ENCODE measurements at regions of chr1 and their contacts with region 1.

Region 1: DNA sequence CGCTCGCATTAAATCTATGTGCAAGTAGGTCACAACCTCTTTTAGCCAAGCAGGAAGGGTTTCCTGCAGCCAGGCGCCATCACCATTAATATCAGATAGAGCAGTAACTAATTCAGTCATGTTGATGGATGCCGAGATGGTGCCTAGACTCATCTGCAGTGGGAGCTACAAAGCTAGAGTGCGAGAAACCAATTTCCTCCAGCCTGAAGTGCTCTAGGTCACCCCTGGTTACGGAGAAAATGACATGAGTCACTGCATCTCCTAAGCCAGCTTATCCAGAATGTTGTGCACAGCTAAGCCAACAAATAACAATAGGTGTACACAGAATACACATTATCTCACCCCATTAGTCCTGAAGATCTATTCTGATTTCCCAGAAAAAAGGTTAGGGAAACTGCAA is 36.0 kb downstream of the OVAAL start:
- DNase-seq: no peak
- ATAC-seq: no peak
- H3K4me3 ChIP-seq: no peak overlapping the region
- H3K27ac ChIP-seq: no peak overlapping the region
- H3K4me1 ChIP-seq: no peaks in the 10 kb centered on the region
- H3K27me3 ChIP-seq: no peaks in the 10 kb centered on the region
- CTCF ChIP-seq: no peak
- POLR2A ChIP-seq: no peak
- RAD21 ChIP-seq: no peak

Region 2: DNA sequence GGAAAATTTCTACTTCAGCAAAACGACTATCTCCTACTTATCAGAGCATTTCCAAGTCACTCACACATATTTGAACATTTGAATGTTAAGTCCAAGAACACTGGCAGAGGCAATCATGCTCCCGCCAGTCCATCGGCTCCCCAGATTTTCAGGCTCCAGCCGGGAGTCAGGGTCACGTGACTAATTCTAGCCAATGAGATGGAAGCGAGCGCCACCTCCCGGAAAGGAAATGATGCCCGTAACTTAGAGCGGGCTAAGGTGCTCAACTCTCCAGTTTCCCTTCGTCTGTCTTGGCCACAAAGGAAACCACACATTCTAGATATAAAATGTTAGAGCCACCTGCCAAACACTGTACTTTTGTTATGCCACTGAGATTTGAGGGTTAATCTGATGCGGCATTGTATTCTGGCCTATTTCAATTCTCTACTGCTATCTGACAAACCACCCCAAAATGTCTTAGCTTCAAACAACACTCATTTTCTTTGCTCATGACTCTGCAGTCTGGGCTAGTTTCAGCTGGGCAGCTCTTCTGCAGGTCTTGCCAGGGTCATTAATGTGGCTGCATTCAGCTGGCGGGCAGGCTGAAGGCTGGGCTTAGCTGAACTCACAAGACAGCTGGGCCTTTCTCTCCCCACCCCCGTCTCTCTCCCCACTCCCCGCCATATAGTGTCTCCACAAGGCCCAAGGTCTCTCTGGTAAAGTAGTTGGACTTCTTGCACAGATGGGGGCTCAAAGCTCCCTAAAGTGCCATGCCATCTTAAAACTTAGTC is 381.1 kb before region 1 on chr1:
- CTCF ChIA-PET with region 1: no interaction called
- POLR2A ChIA-PET with region 1: no interaction called
- dilution Hi-C with region 1: no loop called
- in situ Hi-C with region 1: no loop called
- intact Hi-C with region 1: loop called (anchors 5 kb)
- DNase-seq: no peak
- ATAC-seq: no peak
- H3K4me3 ChIP-seq: no peak overlapping the region
- H3K27ac ChIP-seq: no peak overlapping the region
- H3K4me1 ChIP-seq: peaks cover 2% of the 10 kb centered on the region; the same call in 1 of the 2 replicates
- H3K27me3 ChIP-seq: peaks cover 7% of the 10 kb centered on the region; the same call in 1 of the 2 replicates
- CTCF ChIP-seq: no peak
- POLR2A ChIP-seq: no peak
- RAD21 ChIP-seq: no peak

Region 3: GRCh38 chr1:180521474-180522207 is 73.1 kb before region 1 on chr1:
- CTCF ChIA-PET with region 1: no interaction called
- POLR2A ChIA-PET with region 1: no interaction called
- dilution Hi-C with region 1: no loop called
- in situ Hi-C with region 1: no loop called
- intact Hi-C with region 1: no loop called
- DNase-seq: no peak
- ATAC-seq: no peak
- H3K4me3 ChIP-seq: no peak overlapping the region
- H3K27ac ChIP-seq: no peak overlapping the region; the same call in 1 of the 2 replicates
- H3K4me1 ChIP-seq: peaks cover 23% of the 10 kb centered on the region
- H3K27me3 ChIP-seq: no peaks in the 10 kb centered on the region
- CTCF ChIP-seq: no peak
- POLR2A ChIP-seq: no peak
- RAD21 ChIP-seq: no peak

Region 4: GRCh38 chr1:180609643-180610555 is 15.2 kb after region 1 on chr1:
- CTCF ChIA-PET with region 1: no interaction called
- POLR2A ChIA-PET with region 1: no interaction called
- dilution Hi-C with region 1: no loop called
- in situ Hi-C with region 1: no loop called
- intact Hi-C with region 1: no loop called
- DNase-seq: peak; percentile 34
- ATAC-seq: peak; percentile 36
- H3K4me3 ChIP-seq: no peak overlapping the region
- H3K27ac ChIP-seq: peak overlapping the region; percentile 63; the same call in 1 of the 2 replicates
- H3K4me1 ChIP-seq: peaks cover 9% of the 10 kb centered on the region
- H3K27me3 ChIP-seq: no peaks in the 10 kb centered on the region
- CTCF ChIP-seq: no peak
- POLR2A ChIP-seq: no peak
- RAD21 ChIP-seq: no peak